ENCODE measurements at regions of chr2 and their contacts with region 1.

Region 1: DNA sequence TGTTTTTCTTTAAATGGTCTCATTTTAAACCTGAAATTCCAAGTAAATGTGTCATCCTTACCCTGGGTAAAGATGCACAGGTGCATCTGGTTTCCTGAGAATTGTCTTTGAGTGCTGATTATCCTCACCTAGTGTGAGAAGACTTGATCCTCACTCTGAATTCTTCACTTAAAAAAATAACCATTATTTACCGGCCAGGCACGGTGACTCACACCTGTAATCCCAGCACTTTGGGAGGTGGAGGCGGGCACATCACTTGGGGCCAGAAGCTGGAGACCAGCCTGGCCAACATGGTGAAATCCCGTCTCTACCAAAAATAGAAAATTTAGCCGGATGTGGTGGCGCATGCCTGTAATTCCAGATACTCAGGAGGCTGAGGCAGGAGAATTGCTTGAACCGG is 9.9 kb upstream of the WNT6 start:
- DNase-seq: no peak
- ATAC-seq: no peak
- H3K4me3 ChIP-seq: no peak overlapping the region
- H3K4me1 ChIP-seq: no peaks in the 10 kb centered on the region
- CTCF ChIP-seq: no peak

Region 2: GRCh38 chr2:218694405-218695145 is 155.1 kb before region 1 on chr2:
- intact Hi-C with region 1: no loop called
- DNase-seq: no peak
- ATAC-seq: no peak
- H3K4me3 ChIP-seq: no peak overlapping the region
- H3K4me1 ChIP-seq: no peaks in the 10 kb centered on the region
- CTCF ChIP-seq: no peak

Region 3: DNA sequence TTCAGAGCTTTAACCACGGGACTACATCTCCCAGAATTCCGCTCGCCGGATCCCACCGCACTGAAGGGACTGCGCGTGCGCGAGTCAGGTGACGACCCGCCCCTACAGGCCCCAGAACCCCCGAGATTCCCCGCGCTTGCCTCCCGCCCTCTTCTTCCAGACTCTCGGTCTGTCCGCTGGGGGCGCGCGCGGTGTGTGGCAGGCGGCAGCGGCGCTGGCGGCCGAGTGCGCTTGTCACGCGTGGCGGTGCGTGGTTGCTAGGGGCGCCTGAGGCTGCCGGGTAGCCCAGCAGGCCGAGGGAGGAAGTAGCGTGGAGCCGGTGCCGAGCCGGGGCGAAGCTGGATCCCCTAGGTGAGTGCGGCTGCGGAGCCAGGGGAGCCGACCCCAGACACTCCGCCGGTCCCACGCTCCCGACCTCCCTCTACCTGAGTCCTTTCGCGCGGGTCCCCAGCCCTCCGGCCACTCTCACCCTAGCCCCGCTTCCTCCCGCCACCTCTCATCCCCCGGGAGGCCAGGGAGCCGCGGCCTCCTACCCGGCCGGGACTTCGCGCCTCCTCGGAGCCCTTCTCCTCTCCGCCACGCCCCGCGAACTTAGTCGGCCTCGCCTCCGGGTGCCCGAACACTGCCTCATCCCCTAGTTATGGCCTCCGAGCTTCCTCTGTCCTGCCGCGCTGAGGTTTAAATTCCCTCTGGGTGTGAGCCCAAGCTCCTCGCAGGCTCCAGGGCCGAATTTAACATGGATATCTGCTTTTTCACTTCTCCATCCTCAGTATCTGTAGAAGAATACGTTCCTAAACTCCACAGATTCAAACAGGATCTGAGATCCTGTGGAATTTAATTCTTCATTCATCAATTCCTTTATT is 138.8 kb before region 1 on chr2 and contains the start of gene TTLL4:
- intact Hi-C with region 1: loop called in 1 of 2 experiments (anchors 5 kb)
- DNase-seq: peak; percentile 97 to 99 (median 98)
- ATAC-seq: peak; percentile 99
- H3K4me3 ChIP-seq: peak within 1 kb of the TSS; percentile 43
- H3K4me1 ChIP-seq: peaks cover 3% of the 10 kb centered on the region
- CTCF ChIP-seq: peak; percentile 96
- total RNA-seq, gene TTLL4: 21.0 to 30.1 (median 23.8) TPM

Measured in mucosa of descending colon (tissue), 3 donors.